ENCODE measurements at regions of chr21 and their contacts with region 1.

Region 1: GRCh38 chr21:41816220-41817165 is 49.6 kb upstream of the RIPK4 start:
- DNase-seq: peak; percentile 62 to 81 (median 74)
- H3K4me3 ChIP-seq: no peak overlapping the region
- H3K27ac ChIP-seq: peak overlapping the region in 3 of 5 donors; percentile 20 to 67 (median 40)
- H3K4me1 ChIP-seq: peaks cover 0 to 9% of the 10 kb centered on the region in 2 donors
- H3K27me3 ChIP-seq: no peaks in the 10 kb centered on the region
- CTCF ChIP-seq: peak; percentile 54 to 84 (median 76)
- POLR2A ChIP-seq: no peak

Region 2: GRCh38 chr21:41411449-41412089 is 404.9 kb before region 1 on chr21:
- intact Hi-C with region 1: no loop called
- DNase-seq: peak in 3 of 7 donors; percentile 31 to 58 (median 41)
- H3K4me3 ChIP-seq: no peak overlapping the region
- H3K27ac ChIP-seq: no peak overlapping the region
- H3K4me1 ChIP-seq: no peaks in the 10 kb centered on the region
- H3K27me3 ChIP-seq: no peaks in the 10 kb centered on the region
- CTCF ChIP-seq: peak in 1 of 6 experiments; percentile 15
- POLR2A ChIP-seq: no peak

Region 3: GRCh38 chr21:41744531-41744930 is 72.0 kb before region 1 on chr21:
- intact Hi-C with region 1: no loop called
- DNase-seq: no peak
- H3K4me3 ChIP-seq: no peak overlapping the region
- H3K27ac ChIP-seq: no peak overlapping the region
- H3K4me1 ChIP-seq: no peaks in the 10 kb centered on the region
- H3K27me3 ChIP-seq: no peaks in the 10 kb centered on the region
- CTCF ChIP-seq: no peak
- POLR2A ChIP-seq: no peak

Region 4: DNA sequence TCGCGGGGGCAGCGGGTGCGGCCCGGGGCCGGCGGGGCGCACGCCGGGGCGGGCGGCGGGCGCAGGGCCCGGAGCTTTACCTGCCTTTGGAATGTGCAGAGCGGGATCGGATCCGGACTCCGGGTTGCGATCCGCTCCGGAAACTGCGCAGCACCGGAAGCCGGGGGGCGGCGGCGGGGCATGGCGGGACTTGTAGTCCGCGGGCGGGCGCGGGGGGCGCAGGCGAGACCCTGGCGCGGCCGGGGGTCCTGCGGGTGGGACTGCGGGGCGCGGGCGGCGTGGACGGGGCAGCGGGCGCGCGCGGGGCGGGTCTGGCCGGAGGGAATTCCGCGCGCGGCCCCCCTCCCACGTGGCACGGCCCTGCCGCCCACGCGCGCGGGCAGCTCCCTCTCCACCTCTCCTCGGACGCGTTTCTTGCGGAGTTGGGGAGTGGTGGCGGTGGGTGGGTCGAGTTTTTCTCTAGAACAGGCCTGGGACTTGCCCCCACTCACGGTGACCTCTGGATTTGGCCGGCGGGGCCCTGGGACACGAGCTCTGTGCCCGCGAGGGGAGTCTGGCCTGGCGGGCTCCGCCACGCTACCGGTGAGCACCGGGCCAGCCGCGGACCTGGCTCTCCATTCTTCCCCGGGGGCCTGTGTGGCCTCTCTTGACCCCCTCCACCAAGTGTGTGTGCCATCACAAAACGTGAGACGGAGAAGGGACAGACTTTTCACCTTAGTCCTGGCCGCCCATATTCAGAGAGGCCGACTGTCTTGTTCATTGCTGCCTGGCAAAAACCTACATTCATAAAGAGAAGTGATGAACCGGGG is 62.9 kb after region 1 on chr21 and contains the start of gene PRDM15:
- intact Hi-C with region 1: loop called in 1 of 2 experiments (anchors 10 kb)
- DNase-seq: peak; percentile 78 to 89 (median 85)
- H3K4me3 ChIP-seq: peak within 1 kb of the TSS in 3 of 4 donors; percentile 62 to 94 (median 77)
- H3K27ac ChIP-seq: peak within 1 kb of the TSS; percentile 33 to 100 (median 84)
- H3K4me1 ChIP-seq: peaks cover 6 to 16% of the 10 kb centered on the region in 2 donors
- H3K27me3 ChIP-seq: no peaks in the 10 kb centered on the region
- CTCF ChIP-seq: no peak
- POLR2A ChIP-seq: no peak
- total RNA-seq, gene PRDM15: 3.4 to 6.7 (median 4.3) TPM

Region 5: DNA sequence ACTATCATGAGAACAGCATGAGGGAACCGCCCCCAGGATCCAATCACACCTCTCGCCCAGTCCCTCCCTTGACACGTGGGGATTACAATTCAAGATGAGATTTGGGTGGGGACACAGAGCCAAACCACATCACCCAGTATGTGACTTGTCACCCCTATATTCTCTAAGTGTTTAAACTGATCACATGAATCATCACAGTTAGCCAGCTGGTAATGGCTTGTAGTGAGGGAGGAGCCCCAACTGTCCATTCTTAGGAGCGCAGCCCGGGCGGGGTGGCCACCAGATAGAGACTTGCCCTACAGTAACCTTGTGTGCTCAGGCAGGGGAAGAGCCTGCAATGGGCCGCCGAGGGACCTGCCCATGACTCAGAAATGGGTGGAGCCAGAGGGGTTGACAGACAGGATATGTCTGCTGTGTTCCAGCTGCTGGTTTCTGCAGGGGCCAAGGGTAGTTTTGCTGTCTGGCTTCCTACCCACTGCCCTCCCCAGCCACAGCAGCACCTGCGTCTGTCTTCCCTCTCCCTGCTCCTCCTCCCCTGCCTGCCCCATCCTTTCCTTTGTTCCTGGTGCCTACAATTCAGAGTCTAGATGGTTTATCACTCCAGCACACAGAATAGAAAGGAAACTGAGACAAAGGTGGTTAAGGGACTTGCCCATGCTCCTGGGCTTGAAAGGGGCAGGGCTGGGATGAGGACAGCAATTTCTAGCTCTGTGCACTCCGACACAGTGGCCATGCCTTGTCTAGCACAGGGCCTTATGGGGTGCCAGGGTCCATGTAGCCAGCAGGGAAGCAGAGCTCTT is 411.6 kb after region 1 on chr21:
- intact Hi-C with region 1: no loop called
- DNase-seq: peak; percentile 93 to 99 (median 98)
- H3K4me3 ChIP-seq: no peak overlapping the region
- H3K27ac ChIP-seq: peak overlapping the region; percentile 27 to 90 (median 74)
- H3K4me1 ChIP-seq: peaks cover 51 to 57% of the 10 kb centered on the region in 2 donors
- H3K27me3 ChIP-seq: no peaks in the 10 kb centered on the region
- CTCF ChIP-seq: peak in 1 of 6 experiments; percentile 11
- POLR2A ChIP-seq: peak in 1 of 2 donors; percentile 65